Panc1 (cell line): ENCODE measurements at regions of chr6 and their contacts with region 1.

Region 1: DNA sequence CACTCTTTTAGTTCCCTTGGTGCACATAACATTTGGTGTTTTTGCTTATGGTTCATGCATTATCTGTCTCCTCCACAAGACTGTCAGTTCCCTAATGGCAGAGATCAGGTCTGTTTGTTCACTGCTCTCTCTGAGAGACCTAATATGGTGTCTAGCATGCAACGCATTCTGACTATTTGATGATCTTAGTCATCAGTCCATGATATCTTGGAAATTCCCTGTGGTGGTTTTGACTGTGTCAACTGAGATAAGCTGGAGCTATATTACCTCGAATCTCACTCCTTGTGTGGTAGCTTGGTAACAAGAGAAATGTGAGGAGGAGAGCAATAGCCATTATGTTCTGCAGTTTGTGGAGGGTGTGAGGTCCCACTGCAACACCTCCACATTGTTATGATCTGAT is 229.8 kb downstream of the FRK start:
- DNase-seq: no peak
- ATAC-seq: no peak
- H3K4me3 ChIP-seq: no peak overlapping the region
- H3K27ac ChIP-seq: no peak overlapping the region
- H3K4me1 ChIP-seq: no peaks in the 10 kb centered on the region
- H3K27me3 ChIP-seq: no peaks in the 10 kb centered on the region
- CTCF ChIP-seq: no peak

Region 2: GRCh38 chr6:115796061-115796460 is 34.8 kb before region 1 on chr6:
- CTCF ChIA-PET with region 1: interaction called, 14 read pairs
- POLR2A ChIA-PET with region 1: no interaction called
- in situ Hi-C with region 1: no loop called
- intact Hi-C with region 1: no loop called
- DNase-seq: no peak
- ATAC-seq: no peak
- H3K4me3 ChIP-seq: no peak overlapping the region
- H3K27ac ChIP-seq: no peak overlapping the region
- H3K4me1 ChIP-seq: no peaks in the 10 kb centered on the region
- H3K27me3 ChIP-seq: no peaks in the 10 kb centered on the region
- CTCF ChIP-seq: no peak

Region 3: DNA sequence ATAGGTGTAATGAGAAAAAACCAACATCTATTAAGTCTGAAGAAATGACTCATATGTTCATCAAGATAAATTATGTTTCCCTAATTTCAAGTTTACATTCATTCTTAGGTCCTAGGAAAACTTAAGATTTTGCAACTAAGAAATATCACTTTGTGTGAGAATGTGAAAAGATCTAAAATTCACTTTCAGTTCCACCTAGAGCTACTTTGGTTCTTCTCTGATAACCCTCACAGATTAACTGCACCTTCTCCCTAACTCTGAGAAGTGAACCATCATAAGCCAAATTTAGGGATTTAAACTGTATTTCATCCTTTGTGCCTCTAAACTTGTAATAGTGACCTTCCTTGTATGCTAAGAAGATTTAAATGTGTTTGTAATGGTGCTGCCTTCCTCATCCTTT is 16.8 kb after region 1 on chr6:
- CTCF ChIA-PET with region 1: no interaction called
- POLR2A ChIA-PET with region 1: no interaction called
- in situ Hi-C with region 1: no loop called
- intact Hi-C with region 1: no loop called
- DNase-seq: no peak
- ATAC-seq: no peak
- H3K4me3 ChIP-seq: no peak overlapping the region
- H3K27ac ChIP-seq: no peak overlapping the region
- H3K4me1 ChIP-seq: no peaks in the 10 kb centered on the region
- H3K27me3 ChIP-seq: no peaks in the 10 kb centered on the region
- CTCF ChIP-seq: no peak